Prostate gland (tissue), 2 donors: ENCODE measurements at regions of chr10 and their contacts with region 1.

Region 1: DNA sequence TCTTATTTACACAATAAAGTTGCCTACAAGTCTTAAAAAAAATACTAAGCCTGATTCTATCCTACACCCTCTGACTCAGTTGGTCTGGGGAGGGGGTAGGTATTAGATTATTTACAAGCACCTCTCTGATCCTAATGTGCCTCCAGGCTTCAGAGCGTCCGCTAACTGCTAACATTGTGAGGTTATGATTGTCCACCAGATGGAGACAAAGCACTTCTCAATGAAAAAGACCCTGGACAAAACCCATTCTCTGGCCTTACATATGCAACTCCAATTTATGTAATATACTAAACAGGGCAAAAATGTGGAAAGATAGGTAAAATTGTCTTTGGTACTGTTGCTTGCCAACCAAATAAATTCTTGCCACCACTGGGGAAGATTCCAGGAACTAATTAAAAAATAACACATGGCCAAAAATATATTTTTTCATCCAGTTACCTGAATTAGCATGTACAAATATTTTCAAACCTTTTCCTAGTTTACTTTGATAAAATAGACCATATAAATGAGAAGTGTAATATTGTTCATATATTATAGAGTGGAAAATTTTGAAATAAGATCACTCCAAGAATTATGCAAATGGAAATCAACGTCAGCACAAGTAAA is 92.4 kb downstream of the KIF20B start:
- DNase-seq: peak; percentile 41
- H3K4me3 ChIP-seq: no peak overlapping the region
- H3K27ac ChIP-seq: no peak overlapping the region
- H3K4me1 ChIP-seq: no peaks in the 10 kb centered on the region
- H3K27me3 ChIP-seq: no peaks in the 10 kb centered on the region
- CTCF ChIP-seq: peak; percentile 39 to 76 (median 72)
- POLR2A ChIP-seq: no peak

Region 2: GRCh38 chr10:89695307-89695706 is 98.4 kb before region 1 on chr10:
- intact Hi-C with region 1: no loop called
- DNase-seq: no peak
- H3K4me3 ChIP-seq: no peak overlapping the region
- H3K27ac ChIP-seq: no peak overlapping the region
- H3K4me1 ChIP-seq: no peaks in the 10 kb centered on the region
- H3K27me3 ChIP-seq: no peaks in the 10 kb centered on the region
- CTCF ChIP-seq: no peak
- POLR2A ChIP-seq: no peak

Region 3: DNA sequence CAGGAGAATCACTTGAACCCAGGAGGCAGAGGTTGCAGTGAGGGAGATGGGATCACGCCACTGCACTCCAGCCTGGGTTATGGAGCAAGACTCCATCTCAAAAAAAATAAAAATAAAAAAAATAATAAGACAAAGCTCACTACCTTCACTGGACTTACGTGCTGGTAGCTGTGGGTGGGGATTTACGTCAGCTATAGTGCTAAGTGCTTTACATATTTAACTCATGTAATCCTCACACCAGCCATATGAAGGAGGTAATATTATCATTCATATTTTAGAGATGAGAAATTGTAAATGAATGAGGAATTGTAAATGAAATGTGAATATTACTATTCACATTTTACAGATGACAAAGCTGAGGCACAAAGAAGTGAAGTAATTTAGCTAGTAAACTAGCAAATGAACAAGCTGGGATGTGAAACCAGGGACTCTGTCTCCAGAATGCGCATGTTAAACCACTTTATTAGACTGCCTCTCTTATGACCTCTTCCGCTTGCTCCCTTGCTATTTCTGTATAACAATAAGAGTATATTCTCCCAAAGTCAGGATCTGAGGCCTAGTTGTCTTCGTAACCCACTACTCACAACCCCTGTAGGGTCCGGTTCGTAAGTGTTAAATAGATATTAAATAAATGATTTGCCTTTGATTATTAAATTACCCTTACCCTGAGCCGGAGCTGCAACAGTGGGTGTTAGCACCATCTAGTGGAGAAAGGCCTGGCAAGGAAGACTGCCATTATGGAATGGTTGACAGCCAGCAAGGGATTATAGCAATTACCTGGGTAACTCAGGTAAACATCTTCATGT is 993.8 kb after region 1 on chr10:
- intact Hi-C with region 1: loop called (anchors 5 kb)
- DNase-seq: no peak
- H3K4me3 ChIP-seq: no peak overlapping the region
- H3K27ac ChIP-seq: no peak overlapping the region
- H3K4me1 ChIP-seq: no peaks in the 10 kb centered on the region
- H3K27me3 ChIP-seq: no peaks in the 10 kb centered on the region
- CTCF ChIP-seq: peak in 3 of 4 experiments; percentile 40 to 47 (median 43)
- POLR2A ChIP-seq: no peak

Region 4: DNA sequence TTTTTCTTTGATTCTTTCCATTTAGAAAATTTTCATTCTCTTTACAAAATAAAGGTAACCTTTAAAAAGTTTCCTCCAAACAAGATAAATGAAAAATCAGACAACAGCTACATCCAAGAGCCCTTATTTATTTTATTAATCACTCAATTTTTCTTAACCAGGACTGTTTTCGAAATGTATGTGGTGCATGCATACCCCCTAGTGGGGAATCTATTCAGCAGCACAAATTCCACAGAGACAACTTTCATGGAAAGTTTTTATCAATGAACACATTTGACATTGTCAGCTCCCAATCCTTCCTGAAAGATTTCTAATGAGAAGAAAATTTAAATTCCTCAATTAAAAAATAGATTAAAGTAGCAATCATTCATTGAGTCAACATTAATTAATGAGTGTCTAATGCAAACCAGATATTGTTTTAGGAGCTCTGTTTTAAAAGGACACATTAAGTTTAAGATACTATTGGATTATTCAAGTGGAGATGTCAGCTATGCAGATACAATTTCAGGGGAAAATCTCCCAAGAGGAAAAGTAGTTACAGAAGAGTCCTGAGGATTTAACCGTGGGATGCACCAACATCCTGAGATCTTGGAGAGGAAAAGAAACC is 1069.3 kb after region 1 on chr10:
- intact Hi-C with region 1: loop called (anchors 2 kb)
- DNase-seq: no peak
- H3K4me3 ChIP-seq: no peak overlapping the region
- H3K27ac ChIP-seq: no peak overlapping the region
- H3K4me1 ChIP-seq: no peaks in the 10 kb centered on the region
- H3K27me3 ChIP-seq: no peaks in the 10 kb centered on the region
- CTCF ChIP-seq: peak; percentile 22 to 71 (median 59)
- POLR2A ChIP-seq: no peak